HepG2 (cell line): ENCODE measurements at regions of chr5 and their contacts with region 1.

Region 1: GRCh38 chr5:146965761-146966659 is 87.5 kb upstream of the PPP2R2B start:
- DNase-seq: peak; percentile 78
- ATAC-seq: peak; percentile 99
- H3K4me3 ChIP-seq: no peak overlapping the region
- H3K27ac ChIP-seq: no peak overlapping the region
- H3K4me1 ChIP-seq: no peaks in the 10 kb centered on the region
- H3K27me3 ChIP-seq: no peaks in the 10 kb centered on the region
- CTCF ChIP-seq: peak; percentile 91
- EP300 ChIP-seq: no peak
- POLR2A ChIP-seq: no peak
- RAD21 ChIP-seq: peak; percentile 73

Region 2: GRCh38 chr5:146533260-146533857 is 432.7 kb before region 1 on chr5:
- CTCF ChIA-PET with region 1: interaction called, 5 read pairs
- POLR2A ChIA-PET with region 1: no interaction called
- in situ Hi-C with region 1: no loop called
- intact Hi-C with region 1: loop called (anchors 1 kb)
- DNase-seq: peak; percentile 66
- ATAC-seq: peak; percentile 97
- H3K4me3 ChIP-seq: no peak overlapping the region
- H3K27ac ChIP-seq: no peak overlapping the region
- H3K4me1 ChIP-seq: no peaks in the 10 kb centered on the region
- H3K27me3 ChIP-seq: no peaks in the 10 kb centered on the region
- CTCF ChIP-seq: peak; percentile 89
- EP300 ChIP-seq: no peak
- POLR2A ChIP-seq: no peak
- RAD21 ChIP-seq: no peak

Region 3: GRCh38 chr5:146541958-146542849 is 423.8 kb before region 1 on chr5:
- CTCF ChIA-PET with region 1: interaction called, 15 read pairs
- POLR2A ChIA-PET with region 1: no interaction called
- in situ Hi-C with region 1: loop called (anchors 5 kb)
- intact Hi-C with region 1: loop called (anchors 1 kb)
- DNase-seq: peak; percentile 38
- ATAC-seq: peak; percentile 98
- H3K4me3 ChIP-seq: no peak overlapping the region
- H3K27ac ChIP-seq: no peak overlapping the region
- H3K4me1 ChIP-seq: no peaks in the 10 kb centered on the region
- H3K27me3 ChIP-seq: no peaks in the 10 kb centered on the region
- CTCF ChIP-seq: peak; percentile 86
- EP300 ChIP-seq: no peak
- POLR2A ChIP-seq: no peak
- RAD21 ChIP-seq: 0 out of 2 replicates have a peak, but pooled peaks have one; percentile 35

Region 4: GRCh38 chr5:146565764-146566367 is 400.1 kb before region 1 on chr5:
- CTCF ChIA-PET with region 1: no interaction called
- POLR2A ChIA-PET with region 1: no interaction called
- in situ Hi-C with region 1: no loop called
- intact Hi-C with region 1: loop called (anchors 1 kb)
- DNase-seq: peak; percentile 65
- ATAC-seq: peak; percentile 98
- H3K4me3 ChIP-seq: no peak overlapping the region
- H3K27ac ChIP-seq: no peak overlapping the region
- H3K4me1 ChIP-seq: no peaks in the 10 kb centered on the region
- H3K27me3 ChIP-seq: no peaks in the 10 kb centered on the region
- CTCF ChIP-seq: peak; percentile 79
- EP300 ChIP-seq: no peak
- POLR2A ChIP-seq: no peak
- RAD21 ChIP-seq: no peak

Region 5: DNA sequence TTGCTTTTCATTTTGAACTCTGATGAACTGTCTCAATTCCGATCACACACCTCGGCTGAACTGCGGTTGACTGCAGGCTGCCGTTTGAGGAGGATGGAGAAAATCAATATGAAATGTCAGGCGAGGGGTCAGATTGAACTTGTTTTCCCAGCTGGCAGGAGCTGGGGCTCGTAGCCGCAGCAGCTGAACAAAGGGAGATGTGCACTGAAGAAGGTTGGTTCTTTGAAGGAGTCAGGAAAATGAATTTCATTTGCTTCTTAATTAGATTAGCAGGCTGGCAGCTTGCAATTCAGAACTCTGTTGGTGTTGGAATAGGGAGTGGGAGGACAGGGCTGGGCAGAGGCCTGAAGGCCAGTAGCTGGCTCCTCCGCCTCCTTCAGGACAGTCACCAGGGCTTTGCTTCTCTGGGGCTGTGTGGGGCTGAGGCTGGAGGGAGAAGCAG is 332.7 kb before region 1 on chr5:
- CTCF ChIA-PET with region 1: no interaction called
- POLR2A ChIA-PET with region 1: no interaction called
- in situ Hi-C with region 1: no loop called
- intact Hi-C with region 1: no loop called
- DNase-seq: no peak
- ATAC-seq: no peak
- H3K4me3 ChIP-seq: no peak overlapping the region
- H3K27ac ChIP-seq: no peak overlapping the region
- H3K4me1 ChIP-seq: no peaks in the 10 kb centered on the region
- H3K27me3 ChIP-seq: no peaks in the 10 kb centered on the region
- CTCF ChIP-seq: no peak
- EP300 ChIP-seq: no peak
- POLR2A ChIP-seq: no peak
- RAD21 ChIP-seq: no peak

Region 6: GRCh38 chr5:146653560-146653959 is 312.4 kb before region 1 on chr5:
- CTCF ChIA-PET with region 1: no interaction called
- POLR2A ChIA-PET with region 1: no interaction called
- in situ Hi-C with region 1: loop called (anchors 10 kb)
- intact Hi-C with region 1: no loop called
- DNase-seq: no peak
- ATAC-seq: no peak
- H3K4me3 ChIP-seq: no peak overlapping the region
- H3K27ac ChIP-seq: no peak overlapping the region
- H3K4me1 ChIP-seq: no peaks in the 10 kb centered on the region
- H3K27me3 ChIP-seq: no peaks in the 10 kb centered on the region; a peak in 1 of 5 replicates
- CTCF ChIP-seq: no peak
- EP300 ChIP-seq: no peak
- POLR2A ChIP-seq: no peak
- RAD21 ChIP-seq: no peak

Region 7: DNA sequence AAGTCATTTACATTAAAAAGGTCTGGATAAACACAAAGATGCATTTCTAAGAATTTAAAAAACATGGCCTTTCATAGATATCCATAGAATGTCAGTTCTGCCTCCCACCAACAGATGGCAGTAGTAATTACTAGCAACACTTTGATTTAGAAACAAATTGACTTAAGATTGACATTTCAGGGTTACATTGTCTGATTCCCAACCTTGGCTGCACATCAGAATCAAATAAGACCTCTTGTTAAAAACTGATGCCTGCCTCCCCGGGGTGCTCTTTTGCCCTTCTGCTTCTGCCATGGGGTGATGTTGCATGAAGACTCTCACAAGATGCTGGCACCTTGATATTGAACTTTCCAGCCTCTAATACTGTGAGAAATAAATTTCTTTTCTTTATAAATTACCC is 303.8 kb before region 1 on chr5:
- CTCF ChIA-PET with region 1: interaction called, 13 read pairs
- POLR2A ChIA-PET with region 1: no interaction called
- in situ Hi-C with region 1: loop called (anchors 10 kb)
- intact Hi-C with region 1: loop called (anchors 1 kb)
- DNase-seq: peak; percentile 19
- ATAC-seq: no peak
- H3K4me3 ChIP-seq: no peak overlapping the region
- H3K27ac ChIP-seq: no peak overlapping the region
- H3K4me1 ChIP-seq: no peaks in the 10 kb centered on the region
- H3K27me3 ChIP-seq: no peaks in the 10 kb centered on the region
- CTCF ChIP-seq: peak; percentile 62
- EP300 ChIP-seq: no peak
- POLR2A ChIP-seq: no peak
- RAD21 ChIP-seq: no peak

Region 8: DNA sequence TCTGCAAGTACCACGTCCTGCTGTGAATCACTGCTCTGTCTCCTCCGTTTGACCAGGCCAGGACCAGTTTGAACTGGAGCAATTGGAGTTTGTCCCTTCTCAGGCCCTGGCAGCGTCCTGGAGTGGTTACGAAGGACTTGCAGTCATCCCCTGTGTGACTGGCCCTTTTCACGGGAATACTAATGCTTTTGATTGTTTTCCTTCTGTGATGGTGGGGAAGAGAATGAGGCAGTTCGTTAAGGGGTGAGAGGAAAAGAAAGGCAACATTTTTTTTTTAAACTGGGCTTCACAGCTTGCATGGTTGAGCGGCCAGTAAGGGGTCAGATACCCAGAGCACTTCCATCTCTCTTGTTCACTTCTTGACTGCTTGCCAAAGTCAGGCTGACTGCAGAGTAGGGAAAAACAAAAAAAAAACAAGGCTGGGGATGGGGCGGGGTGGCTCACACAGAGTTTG is 115.3 kb after region 1 on chr5:
- CTCF ChIA-PET with region 1: no interaction called
- POLR2A ChIA-PET with region 1: no interaction called
- in situ Hi-C with region 1: no loop called
- intact Hi-C with region 1: no loop called
- DNase-seq: no peak
- ATAC-seq: no peak
- H3K4me3 ChIP-seq: no peak overlapping the region
- H3K27ac ChIP-seq: no peak overlapping the region
- H3K4me1 ChIP-seq: no peaks in the 10 kb centered on the region
- H3K27me3 ChIP-seq: no peaks in the 10 kb centered on the region; a peak in 1 of 5 replicates
- CTCF ChIP-seq: no peak
- EP300 ChIP-seq: no peak
- POLR2A ChIP-seq: no peak
- RAD21 ChIP-seq: no peak

Region 9: GRCh38 chr5:147507480-147508126 is 541.6 kb after region 1 on chr5:
- CTCF ChIA-PET with region 1: no interaction called
- POLR2A ChIA-PET with region 1: no interaction called
- in situ Hi-C with region 1: no loop called
- intact Hi-C with region 1: no loop called
- DNase-seq: no peak
- ATAC-seq: no peak
- H3K4me3 ChIP-seq: no peak overlapping the region
- H3K27ac ChIP-seq: no peak overlapping the region
- H3K4me1 ChIP-seq: no peaks in the 10 kb centered on the region
- H3K27me3 ChIP-seq: peaks cover 0 to 23% of the 10 kb centered on the region in 2 experiments; a peak in 3 of 5 replicates
- CTCF ChIP-seq: no peak
- EP300 ChIP-seq: no peak
- POLR2A ChIP-seq: no peak
- RAD21 ChIP-seq: no peak

Region 10: DNA sequence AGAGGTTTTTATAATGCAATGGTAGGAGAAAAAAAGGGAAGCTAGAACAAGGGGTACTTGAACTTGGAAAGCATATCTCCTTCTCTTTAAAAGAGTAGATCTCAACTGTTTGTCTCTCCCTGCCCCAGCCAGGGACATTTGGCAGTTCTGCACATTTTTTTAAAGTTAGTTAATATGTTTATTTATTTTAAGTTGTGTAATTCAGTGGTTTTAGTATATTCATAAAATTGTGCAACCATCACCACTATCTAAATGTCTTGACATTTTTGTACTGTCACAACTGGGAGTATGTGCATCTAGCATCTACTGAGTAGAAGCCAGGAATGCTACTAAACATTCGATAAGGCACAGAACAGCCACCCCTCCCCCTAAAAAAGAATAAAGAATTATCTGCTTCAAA is 647.3 kb after region 1 on chr5:
- CTCF ChIA-PET with region 1: no interaction called
- POLR2A ChIA-PET with region 1: no interaction called
- in situ Hi-C with region 1: no loop called
- intact Hi-C with region 1: no loop called
- DNase-seq: no peak
- ATAC-seq: no peak
- H3K4me3 ChIP-seq: no peak overlapping the region
- H3K27ac ChIP-seq: no peak overlapping the region
- H3K4me1 ChIP-seq: no peaks in the 10 kb centered on the region
- H3K27me3 ChIP-seq: no peaks in the 10 kb centered on the region
- CTCF ChIP-seq: no peak
- EP300 ChIP-seq: no peak
- POLR2A ChIP-seq: no peak
- RAD21 ChIP-seq: no peak